ENCODE measurements at regions of chr19 and their contacts with region 1.

Region 1: DNA sequence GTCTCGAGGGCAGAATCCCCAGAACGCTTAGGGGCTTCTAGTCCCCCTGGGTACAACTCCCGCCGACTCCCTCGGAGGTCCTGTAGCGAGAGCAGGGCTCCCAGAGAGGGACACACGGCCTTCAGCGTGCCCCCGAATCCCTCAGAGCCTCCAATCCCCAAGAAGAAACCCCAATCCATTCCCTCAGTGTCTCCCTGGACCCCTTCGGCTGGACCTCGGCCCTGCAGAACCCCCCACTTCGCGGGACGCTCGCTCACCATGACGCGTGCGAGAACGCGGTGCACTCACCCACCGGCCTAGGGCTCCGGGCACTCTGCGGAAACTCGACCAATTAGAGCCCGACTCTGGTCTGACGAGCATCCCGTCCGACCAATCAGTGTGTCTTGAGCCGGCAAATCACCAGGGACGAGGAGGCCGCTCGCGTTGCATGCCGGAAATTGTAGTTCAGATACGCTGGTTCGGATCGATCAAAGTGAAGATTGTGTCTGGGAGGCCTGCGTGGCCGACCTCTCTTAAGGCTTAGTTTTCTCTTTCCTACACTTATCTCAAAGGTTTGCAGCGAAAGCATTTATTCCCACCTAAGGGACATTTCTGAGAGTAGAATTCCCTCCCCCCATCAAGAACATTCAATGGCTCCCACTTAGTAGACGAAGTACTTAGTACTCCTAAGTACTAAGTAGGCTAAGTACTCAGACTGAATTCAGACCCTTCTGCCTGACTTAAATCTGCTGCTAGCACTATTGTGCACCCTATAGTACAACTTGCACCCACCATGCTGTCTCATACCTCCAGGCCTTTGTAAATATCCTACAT is at the start of gene TMEM161A:
- DNase-seq: peak in 1 of 2 donors; percentile 98
- H3K4me3 ChIP-seq: peak within 1 kb of the TSS; percentile 68 to 95
- H3K27ac ChIP-seq: peak within 1 kb of the TSS; percentile 72
- H3K4me1 ChIP-seq: peaks cover 28% of the 10 kb centered on the region
- H3K27me3 ChIP-seq: no peaks in the 10 kb centered on the region
- CTCF ChIP-seq: no peak
- POLR2A ChIP-seq: peak in 1 of 2 donors; percentile 48
- total RNA-seq, gene TMEM161A: 31.7 TPM

Region 2: GRCh38 chr19:19063183-19064097 is 74.9 kb before region 1 on chr19 and contains the start of gene SLC25A42:
- intact Hi-C with region 1: loop called (anchors 5 kb)
- DNase-seq: peak; percentile 99 to 100
- H3K4me3 ChIP-seq: peak within 1 kb of the TSS; percentile 86 to 89
- H3K27ac ChIP-seq: peak within 1 kb of the TSS; percentile 81
- H3K4me1 ChIP-seq: peaks cover 27% of the 10 kb centered on the region
- H3K27me3 ChIP-seq: no peaks in the 10 kb centered on the region
- CTCF ChIP-seq: peak in 1 of 3 experiments; percentile 3
- POLR2A ChIP-seq: peak in 1 of 2 donors; percentile 46
- total RNA-seq, gene SLC25A42: 6.6 TPM

Region 3: DNA sequence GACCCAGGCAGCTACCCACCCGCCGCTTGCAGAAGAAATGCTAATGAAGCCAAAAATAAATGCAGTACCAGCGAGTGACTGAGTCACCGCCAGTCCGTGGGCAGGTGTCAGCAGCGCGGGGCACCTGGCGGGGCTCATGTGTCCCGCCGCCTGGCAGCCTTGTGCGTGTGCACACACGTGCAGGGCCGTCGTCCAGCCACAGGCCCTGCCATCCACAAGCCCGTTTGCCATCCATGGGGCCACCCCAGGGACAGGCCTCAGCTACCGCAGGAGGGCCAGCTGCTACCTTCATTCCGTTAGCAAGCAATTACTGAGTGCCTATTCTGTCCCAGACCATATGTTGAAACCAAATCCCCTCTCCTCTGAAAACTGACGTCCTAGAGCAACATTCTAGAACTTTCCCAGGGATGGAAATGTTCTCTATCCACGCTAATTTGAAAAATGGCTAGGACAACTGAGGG is 93.9 kb after region 1 on chr19:
- intact Hi-C with region 1: no loop called
- DNase-seq: no peak
- H3K4me3 ChIP-seq: no peak overlapping the region
- H3K27ac ChIP-seq: no peak overlapping the region
- H3K4me1 ChIP-seq: no peaks in the 10 kb centered on the region
- H3K27me3 ChIP-seq: no peaks in the 10 kb centered on the region
- CTCF ChIP-seq: no peak
- POLR2A ChIP-seq: no peak

Measured in vagina (tissue), 2 donors.